Mammary epithelial cell (primary cell): ENCODE measurements at regions of chr1 and their contacts with region 1.

Region 1: DNA sequence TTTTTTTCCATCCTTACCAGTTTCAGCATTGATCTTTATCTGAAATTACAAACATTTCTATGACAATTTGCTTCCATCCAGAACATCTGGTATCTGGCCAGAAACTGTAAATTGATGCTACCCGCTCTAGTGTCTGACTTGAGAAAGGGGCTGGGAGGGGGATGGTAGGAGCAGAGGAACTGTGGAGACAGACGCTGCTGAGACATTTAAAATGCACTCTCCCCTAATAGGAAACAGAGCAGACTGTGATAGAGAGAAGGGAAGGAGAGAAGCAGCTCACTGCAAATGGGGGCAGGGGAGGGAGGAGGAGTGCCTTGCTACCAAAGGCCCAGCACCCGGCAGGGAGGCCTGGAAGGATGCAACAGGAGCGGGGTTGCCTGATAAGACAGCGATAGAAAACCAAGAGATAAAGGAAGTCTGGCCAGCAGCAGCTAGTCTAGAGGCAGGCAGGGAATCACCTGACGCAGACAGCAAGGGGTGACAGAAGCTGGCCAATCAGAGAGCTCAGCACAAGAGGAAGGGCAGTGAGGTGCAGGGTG is 195.5 kb upstream of the NFIA start:
- DNase-seq: no peak
- H3K4me3 ChIP-seq: no peak overlapping the region
- H3K27ac ChIP-seq: no peak overlapping the region
- H3K4me1 ChIP-seq: no peaks in the 10 kb centered on the region
- H3K27me3 ChIP-seq: peaks cover 2% of the 10 kb centered on the region
- CTCF ChIP-seq: no peak

Region 2: DNA sequence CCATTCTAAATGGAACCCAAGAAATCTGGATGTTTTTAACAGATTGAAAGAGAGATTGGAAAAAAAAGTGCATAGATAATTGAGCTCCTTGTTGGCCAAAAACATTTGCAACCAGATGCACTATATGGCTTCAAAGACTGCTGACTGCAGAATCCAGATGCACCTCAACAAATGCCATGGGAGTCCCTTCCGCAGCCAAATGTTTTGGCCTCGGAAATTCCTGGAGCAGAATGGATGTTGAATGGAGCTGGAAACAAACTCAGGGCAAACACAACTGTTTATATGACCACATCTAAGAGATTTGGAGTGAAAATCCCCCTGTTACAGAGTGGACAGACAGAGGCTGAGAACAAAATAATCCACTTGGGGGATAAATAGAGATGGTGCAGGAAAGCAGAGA is 89.5 kb before region 1 on chr1:
- CTCF ChIA-PET with region 1: no interaction called
- dilution Hi-C with region 1: no loop called
- in situ Hi-C with region 1: no loop called
- intact Hi-C with region 1: no loop called
- DNase-seq: no peak
- H3K4me3 ChIP-seq: no peak overlapping the region
- H3K27ac ChIP-seq: no peak overlapping the region
- H3K4me1 ChIP-seq: no peaks in the 10 kb centered on the region
- H3K27me3 ChIP-seq: no peaks in the 10 kb centered on the region
- CTCF ChIP-seq: no peak

Region 3: DNA sequence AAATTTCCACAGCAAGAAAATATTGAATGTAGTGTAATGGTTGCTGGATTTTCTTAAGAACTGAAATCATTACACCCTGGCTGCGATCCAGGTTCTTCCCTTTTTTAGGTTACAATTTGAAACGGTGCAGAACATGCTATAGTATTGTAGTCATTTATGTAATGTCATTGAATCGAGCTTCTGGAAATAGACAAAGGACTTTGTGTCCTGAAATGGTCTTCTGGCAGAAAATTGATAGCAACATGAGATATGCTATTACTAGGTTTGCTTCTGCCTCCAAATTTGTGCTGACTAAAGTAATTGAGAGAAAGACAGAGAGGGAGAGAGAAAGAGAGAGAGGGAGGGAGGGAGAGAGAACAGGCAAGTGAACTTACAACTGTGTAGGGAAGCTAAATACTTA is 49.3 kb after region 1 on chr1:
- CTCF ChIA-PET with region 1: no interaction called
- dilution Hi-C with region 1: no loop called
- in situ Hi-C with region 1: loop called in 1 of 2 experiments (anchors 10 kb)
- intact Hi-C with region 1: no loop called
- DNase-seq: no peak
- H3K4me3 ChIP-seq: no peak overlapping the region
- H3K27ac ChIP-seq: no peak overlapping the region
- H3K4me1 ChIP-seq: no peaks in the 10 kb centered on the region
- H3K27me3 ChIP-seq: no peaks in the 10 kb centered on the region
- CTCF ChIP-seq: no peak